Activated CD4-positive, alpha-beta memory T cell treated with anti-CD3 and anti-CD28 coated beads, Interleukin-2, amount 10 ng/mL, durations not matched to agents 7 days and 5 days (primary cell): ENCODE measurements at regions of chr22 and their contacts with region 1.

Region 1: DNA sequence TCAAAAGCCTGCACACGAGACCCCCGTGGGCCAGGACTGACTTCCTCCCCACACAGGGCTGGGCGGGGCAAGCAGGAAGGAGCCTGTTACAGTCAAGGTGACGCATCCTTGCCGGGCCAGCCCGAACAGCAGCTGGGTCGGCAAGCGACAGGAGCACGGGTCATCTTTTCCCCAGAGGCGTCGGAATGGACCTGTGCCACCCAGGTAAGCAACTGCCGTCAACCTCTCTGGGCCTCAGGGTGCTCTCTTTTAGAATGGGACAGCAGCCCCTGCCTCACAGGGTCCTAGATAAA is at the start of gene CYTH4:
- DNase-seq: peak; percentile 84
- H3K4me3 Mint-ChIP-seq: peak within 1 kb of the TSS; percentile 94
- H3K27ac Mint-ChIP-seq: peak within 1 kb of the TSS; percentile 95
- H3K4me1 Mint-ChIP-seq: peaks cover 59% of the 10 kb centered on the region
- H3K27me3 Mint-ChIP-seq: peaks cover 1% of the 10 kb centered on the region
- total RNA-seq, gene CYTH4: 114 to 126 TPM

Region 2: DNA sequence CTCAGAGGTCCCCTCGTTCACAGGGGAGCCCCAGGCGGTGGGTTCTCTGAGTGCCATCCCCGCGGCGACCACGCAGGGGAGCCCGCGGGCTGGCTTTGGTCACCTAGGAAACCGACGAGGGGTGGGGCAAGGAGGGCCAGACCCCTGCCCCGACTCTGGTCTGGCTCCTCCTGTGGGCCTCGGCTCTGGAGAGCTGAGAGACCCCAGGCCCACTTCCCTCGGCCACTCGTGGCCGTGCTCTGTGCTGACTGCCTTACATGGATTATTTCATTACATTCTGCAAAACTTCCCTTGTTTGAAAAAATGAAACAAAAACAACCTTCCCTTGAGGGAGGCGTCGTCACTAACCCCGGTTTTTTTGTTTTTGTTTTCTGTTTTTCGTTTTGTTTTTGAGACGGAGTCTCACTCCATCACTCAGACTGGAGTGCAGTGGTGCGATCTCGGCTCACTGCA is 15.2 kb before region 1 on chr22:
- CTCF ChIA-PET with region 1: interaction called, 16 read pairs
- POLR2A ChIA-PET with region 1: interaction called, 12 read pairs
- DNase-seq: peak; percentile 80
- H3K4me3 Mint-ChIP-seq: peak overlapping the region; percentile 67
- H3K27ac Mint-ChIP-seq: peak overlapping the region; percentile 81
- H3K4me1 Mint-ChIP-seq: peaks cover 37% of the 10 kb centered on the region
- H3K27me3 Mint-ChIP-seq: peaks cover 10% of the 10 kb centered on the region

Region 3: GRCh38 chr22:37303821-37304274 is 21.5 kb after region 1 on chr22:
- CTCF ChIA-PET with region 1: interaction called, 10 read pairs
- POLR2A ChIA-PET with region 1: interaction called, 80 read pairs
- DNase-seq: peak; percentile 75
- H3K4me3 Mint-ChIP-seq: no peak overlapping the region
- H3K27ac Mint-ChIP-seq: peak overlapping the region; percentile 90
- H3K4me1 Mint-ChIP-seq: peaks cover 97% of the 10 kb centered on the region
- H3K27me3 Mint-ChIP-seq: no peaks in the 10 kb centered on the region

Region 4: DNA sequence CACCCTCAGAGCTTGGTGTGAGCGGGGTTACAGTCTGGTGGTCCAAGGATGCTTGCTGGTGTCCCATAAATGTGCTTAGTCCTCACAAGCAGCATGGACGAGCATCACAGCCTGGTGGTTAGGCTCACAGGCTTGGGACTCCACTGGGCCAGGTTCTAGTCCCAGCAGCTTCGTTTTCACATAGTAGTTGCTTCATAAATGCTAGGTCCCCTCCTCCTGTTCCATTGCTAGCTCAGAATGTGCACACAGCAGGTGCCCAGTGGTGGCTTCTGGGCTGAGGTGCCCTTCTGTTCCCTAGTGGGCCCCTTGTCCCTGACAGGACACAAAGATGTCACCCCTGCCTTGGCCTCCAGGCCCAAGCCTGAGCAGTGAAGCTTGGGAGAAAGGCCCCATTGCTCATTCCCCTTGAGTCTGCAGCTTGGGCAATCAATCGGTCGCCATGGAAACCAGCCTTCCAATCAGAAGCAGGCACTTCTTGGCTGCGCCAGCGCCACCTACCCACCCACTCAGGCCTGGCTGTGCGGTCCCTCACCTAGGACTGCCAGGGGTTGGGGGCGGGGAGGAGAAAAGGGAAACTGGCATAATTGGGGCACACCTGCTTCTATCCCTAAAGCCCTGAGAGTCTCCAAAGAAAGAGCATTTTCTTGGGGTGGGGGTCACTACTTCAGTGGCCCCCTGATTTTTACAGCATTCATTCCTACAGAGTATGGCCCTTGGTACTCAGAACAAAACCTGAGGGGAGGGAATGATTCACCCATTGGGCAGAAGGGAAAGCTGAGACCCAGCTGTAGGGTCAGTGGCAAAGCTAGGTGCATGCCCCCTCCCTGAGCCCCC is 48.1 kb after region 1 on chr22:
- CTCF ChIA-PET with region 1: no interaction called
- POLR2A ChIA-PET with region 1: no interaction called
- DNase-seq: peak; percentile 59
- H3K4me3 Mint-ChIP-seq: no peak overlapping the region
- H3K27ac Mint-ChIP-seq: no peak overlapping the region
- H3K4me1 Mint-ChIP-seq: peaks cover 9% of the 10 kb centered on the region
- H3K27me3 Mint-ChIP-seq: peaks cover 66% of the 10 kb centered on the region